ENCODE measurements at regions of chr10 and their contacts with region 1.

Region 1: GRCh38 chr10:52740913-52741675 is 31.5 kb downstream of the MBL2 start:
- H3K4me3 ChIP-seq: no peak overlapping the region
- H3K27ac ChIP-seq: no peak overlapping the region
- H3K4me1 ChIP-seq: no peaks in the 10 kb centered on the region
- CTCF ChIP-seq: no peak

Region 2: DNA sequence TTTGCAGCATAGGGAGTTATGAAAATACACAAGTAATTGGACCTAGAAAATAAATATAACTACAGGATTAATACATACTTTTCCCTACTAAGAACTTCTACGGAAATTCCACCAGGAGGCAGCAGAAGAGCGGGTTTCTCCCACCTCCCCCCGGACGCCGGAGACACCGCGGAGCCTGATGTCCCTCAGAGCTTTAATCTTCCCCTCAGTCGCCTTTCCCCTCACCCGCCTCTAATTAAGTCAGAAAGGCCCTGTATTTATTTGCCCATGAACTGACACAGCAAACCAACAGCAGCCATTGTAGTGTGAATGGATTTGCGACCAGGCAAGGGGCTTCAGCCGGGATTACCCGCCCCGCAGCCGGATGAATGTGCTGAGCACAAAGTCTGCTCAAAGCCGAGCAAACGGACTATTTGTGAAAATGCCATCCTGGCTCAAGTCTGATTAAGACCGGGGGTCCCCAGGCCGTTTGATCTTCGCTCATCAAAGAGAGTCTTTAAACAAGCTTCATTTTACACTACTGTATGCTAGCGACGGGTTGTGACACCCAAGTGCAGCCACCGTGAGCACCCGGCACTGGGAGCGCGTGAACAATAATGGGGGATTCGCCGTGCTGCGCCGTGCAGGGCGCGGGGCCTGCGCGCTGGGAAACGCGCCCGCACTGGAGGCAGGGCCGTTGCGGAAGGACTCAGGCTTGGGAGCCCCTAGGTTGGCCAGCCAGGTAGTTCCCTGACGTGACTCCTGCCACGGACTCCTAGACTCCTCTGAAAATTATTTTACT is 432.7 kb before region 1 on chr10:
- CTCF ChIA-PET with region 1: interaction called, 14 read pairs
- POLR2A ChIA-PET with region 1: no interaction called
- H3K4me3 ChIP-seq: peak overlapping the region; percentile 22; the same call in 1 of the 2 replicates
- H3K27ac ChIP-seq: no peak overlapping the region
- H3K4me1 ChIP-seq: no peaks in the 10 kb centered on the region
- CTCF ChIP-seq: peak; percentile 44

Region 3: DNA sequence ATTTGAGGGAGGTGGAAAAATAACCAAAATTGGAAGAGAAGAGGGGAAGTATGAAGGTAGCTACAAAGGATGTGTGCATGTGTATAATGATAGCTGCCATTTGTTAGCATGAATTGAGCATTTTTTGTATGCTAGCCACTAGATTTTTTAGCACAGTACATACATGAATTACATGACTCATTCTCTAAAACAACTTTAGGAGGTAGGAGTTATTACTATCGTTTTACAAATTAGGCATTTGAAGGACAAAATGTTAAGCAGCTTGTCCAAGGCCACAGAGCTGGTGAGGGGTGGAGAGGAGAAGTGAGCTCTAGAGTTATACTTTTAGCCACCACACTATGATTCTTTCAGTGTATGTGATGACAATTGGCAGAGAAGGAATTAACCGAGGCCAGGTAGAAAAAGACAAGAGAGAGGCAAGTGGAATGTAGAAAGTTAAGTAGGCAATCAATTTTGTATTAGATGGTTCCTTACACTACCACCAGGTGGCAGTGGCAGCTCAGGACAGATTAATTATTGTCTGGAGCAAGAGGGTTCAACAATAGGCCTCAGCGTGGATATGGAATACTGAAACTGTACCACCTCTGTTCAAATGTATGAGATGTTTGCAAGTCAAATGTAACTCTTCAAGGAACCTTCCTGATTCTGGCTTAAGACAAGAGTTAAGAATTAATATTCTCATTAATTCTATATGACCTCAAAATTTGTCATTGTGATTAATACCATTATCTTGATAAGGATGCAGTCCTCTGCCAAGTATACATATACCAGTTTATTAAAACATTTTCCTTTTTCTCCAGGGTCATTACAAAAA is 96.5 kb before region 1 on chr10:
- CTCF ChIA-PET with region 1: interaction called, 37 read pairs
- POLR2A ChIA-PET with region 1: no interaction called
- H3K4me3 ChIP-seq: no peak overlapping the region
- H3K27ac ChIP-seq: no peak overlapping the region
- H3K4me1 ChIP-seq: no peaks in the 10 kb centered on the region
- CTCF ChIP-seq: peak; percentile 74

Region 4: GRCh38 chr10:52677086-52677485 is 64.0 kb before region 1 on chr10:
- CTCF ChIA-PET with region 1: no interaction called
- POLR2A ChIA-PET with region 1: no interaction called
- H3K4me3 ChIP-seq: no peak overlapping the region
- H3K27ac ChIP-seq: no peak overlapping the region
- H3K4me1 ChIP-seq: no peaks in the 10 kb centered on the region
- CTCF ChIP-seq: no peak

Measured in HEK293 (cell line).